Upper lobe of right lung (tissue), 1 donor: ENCODE measurements at regions of chr7 and their contacts with region 1.

Region 1: GRCh38 chr7:27160546-27161213 is 4.2 kb upstream of the HOXA7 start:
- DNase-seq: peak; percentile 92
- ATAC-seq: peak; percentile 93
- H3K4me3 ChIP-seq: peak overlapping the region; percentile 62
- H3K27ac ChIP-seq: peak overlapping the region; percentile 44
- H3K4me1 ChIP-seq: peaks cover 24% of the 10 kb centered on the region
- H3K27me3 ChIP-seq: peaks cover 90% of the 10 kb centered on the region
- CTCF ChIP-seq: peak; percentile 99

Region 2: GRCh38 chr7:25862260-25863037 is 1298.2 kb before region 1 on chr7:
- intact Hi-C with region 1: loop called (anchors 10 kb)
- DNase-seq: peak; percentile 90
- ATAC-seq: peak; percentile 96
- H3K4me3 ChIP-seq: peak overlapping the region; percentile 3
- H3K27ac ChIP-seq: no peak overlapping the region
- H3K4me1 ChIP-seq: no peaks in the 10 kb centered on the region
- H3K27me3 ChIP-seq: peaks cover 100% of the 10 kb centered on the region
- CTCF ChIP-seq: no peak

Region 3: DNA sequence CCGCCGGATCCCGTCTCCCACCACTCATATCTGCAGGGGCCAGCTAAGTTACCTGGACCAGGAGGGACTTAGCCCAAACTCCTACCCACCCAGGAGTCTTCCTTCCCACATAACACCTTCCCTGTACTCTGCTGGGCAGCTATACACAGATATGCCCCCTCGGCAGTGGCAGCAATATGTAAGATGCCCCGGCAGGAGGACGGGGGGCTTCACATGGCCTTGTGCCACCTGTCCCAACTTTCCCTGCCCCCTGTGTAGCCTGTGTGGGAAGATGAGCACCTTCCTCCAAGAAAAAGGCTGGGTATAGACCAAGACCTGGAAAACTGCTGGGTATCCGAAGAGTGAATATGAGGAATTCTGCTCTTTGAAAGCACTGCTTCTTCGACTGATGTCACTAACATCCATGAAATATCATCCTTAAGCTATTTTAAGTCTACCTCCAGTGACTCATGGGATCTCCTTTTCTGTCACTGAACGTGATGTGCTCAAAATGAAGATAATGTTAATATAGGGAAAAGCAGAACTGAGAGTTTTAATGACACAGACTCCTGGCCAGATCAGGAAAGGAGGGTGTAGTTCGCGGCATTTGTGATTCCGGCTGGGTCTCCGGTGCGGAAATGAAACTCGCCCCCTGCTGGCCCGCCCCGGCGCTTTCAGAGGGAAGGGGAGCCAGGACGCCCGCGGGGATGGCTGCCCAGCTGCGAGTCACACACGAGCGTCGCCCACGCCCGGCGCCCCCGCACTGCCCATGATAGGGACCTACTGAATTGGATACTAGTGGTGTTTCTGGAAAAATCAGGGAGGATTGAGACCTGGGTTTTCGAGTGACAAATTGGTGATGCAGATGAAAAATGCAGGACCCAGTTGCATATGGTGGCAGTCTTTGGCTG is 1265.5 kb before region 1 on chr7:
- intact Hi-C with region 1: loop called (anchors 10 kb)
- DNase-seq: peak; percentile 87
- ATAC-seq: peak; percentile 86
- H3K4me3 ChIP-seq: peak overlapping the region; percentile 0
- H3K27ac ChIP-seq: no peak overlapping the region
- H3K4me1 ChIP-seq: peaks cover 3% of the 10 kb centered on the region
- H3K27me3 ChIP-seq: peaks cover under 1% of the 10 kb centered on the region
- CTCF ChIP-seq: peak; percentile 76

Region 4: GRCh38 chr7:26365077-26365900 is 795.4 kb before region 1 on chr7:
- intact Hi-C with region 1: loop called (anchors 5 kb)
- DNase-seq: no peak
- ATAC-seq: peak; percentile 93
- H3K4me3 ChIP-seq: no peak overlapping the region
- H3K27ac ChIP-seq: no peak overlapping the region
- H3K4me1 ChIP-seq: peaks cover 13% of the 10 kb centered on the region
- H3K27me3 ChIP-seq: peaks cover 1% of the 10 kb centered on the region
- CTCF ChIP-seq: peak; percentile 77

Region 5: GRCh38 chr7:27080844-27081436 is 79.7 kb before region 1 on chr7:
- intact Hi-C with region 1: no loop called
- DNase-seq: no peak
- ATAC-seq: no peak
- H3K4me3 ChIP-seq: no peak overlapping the region
- H3K27ac ChIP-seq: no peak overlapping the region
- H3K4me1 ChIP-seq: no peaks in the 10 kb centered on the region
- H3K27me3 ChIP-seq: no peaks in the 10 kb centered on the region
- CTCF ChIP-seq: no peak